ENCODE measurements at regions of chr17 and their contacts with region 1.

Region 1: DNA sequence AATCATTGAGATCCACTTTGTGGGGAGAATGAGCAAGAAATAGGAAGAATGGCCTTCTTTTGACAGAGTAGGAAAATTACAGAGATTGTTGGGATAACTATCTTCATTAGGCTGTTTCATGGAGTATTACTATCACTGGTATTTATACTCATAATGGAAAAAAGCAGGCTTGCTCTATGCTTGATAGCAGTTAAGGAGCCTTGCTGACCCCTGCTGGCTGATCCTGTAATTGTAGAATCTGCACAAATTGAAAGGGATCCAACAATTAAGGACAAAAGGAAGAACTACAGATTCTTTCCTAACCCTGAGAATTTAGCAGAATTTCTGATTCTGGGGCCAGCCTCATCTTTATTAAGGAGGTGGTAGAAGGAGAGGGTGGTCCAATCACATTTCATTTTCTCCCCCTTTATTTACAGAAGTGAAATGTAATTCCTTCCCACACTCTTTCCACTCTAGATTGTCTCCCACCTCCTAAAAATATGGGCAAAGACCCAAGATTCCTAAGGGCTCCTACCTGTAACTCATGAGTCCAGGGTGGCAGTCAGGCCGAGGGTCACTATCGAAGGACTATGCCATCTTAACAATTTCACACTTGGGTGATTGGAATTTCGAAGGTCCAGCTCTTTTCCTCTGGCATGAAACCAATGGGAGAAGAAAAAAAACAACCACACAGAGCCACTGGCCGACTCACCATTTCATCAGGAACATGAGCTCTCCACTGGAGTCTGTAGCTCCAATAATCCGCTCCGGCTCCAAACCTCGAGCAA is 26.3 kb downstream of the NFE2L1 start:
- DNase-seq: peak; percentile 82
- ATAC-seq: peak; percentile 71
- H3K4me3 Mint-ChIP-seq: no peak overlapping the region
- H3K27ac Mint-ChIP-seq: no peak overlapping the region
- H3K4me1 Mint-ChIP-seq: no peaks in the 10 kb centered on the region
- H3K27me3 Mint-ChIP-seq: no peaks in the 10 kb centered on the region

Region 2: GRCh38 chr17:47882247-47882646 is 192.3 kb before region 1 on chr17:
- CTCF ChIA-PET with region 1: no interaction called
- POLR2A ChIA-PET with region 1: no interaction called
- DNase-seq: no peak
- ATAC-seq: no peak
- H3K4me3 Mint-ChIP-seq: no peak overlapping the region
- H3K27ac Mint-ChIP-seq: no peak overlapping the region
- H3K4me1 Mint-ChIP-seq: peaks cover 19% of the 10 kb centered on the region
- H3K27me3 Mint-ChIP-seq: peaks cover 12% of the 10 kb centered on the region

Region 3: DNA sequence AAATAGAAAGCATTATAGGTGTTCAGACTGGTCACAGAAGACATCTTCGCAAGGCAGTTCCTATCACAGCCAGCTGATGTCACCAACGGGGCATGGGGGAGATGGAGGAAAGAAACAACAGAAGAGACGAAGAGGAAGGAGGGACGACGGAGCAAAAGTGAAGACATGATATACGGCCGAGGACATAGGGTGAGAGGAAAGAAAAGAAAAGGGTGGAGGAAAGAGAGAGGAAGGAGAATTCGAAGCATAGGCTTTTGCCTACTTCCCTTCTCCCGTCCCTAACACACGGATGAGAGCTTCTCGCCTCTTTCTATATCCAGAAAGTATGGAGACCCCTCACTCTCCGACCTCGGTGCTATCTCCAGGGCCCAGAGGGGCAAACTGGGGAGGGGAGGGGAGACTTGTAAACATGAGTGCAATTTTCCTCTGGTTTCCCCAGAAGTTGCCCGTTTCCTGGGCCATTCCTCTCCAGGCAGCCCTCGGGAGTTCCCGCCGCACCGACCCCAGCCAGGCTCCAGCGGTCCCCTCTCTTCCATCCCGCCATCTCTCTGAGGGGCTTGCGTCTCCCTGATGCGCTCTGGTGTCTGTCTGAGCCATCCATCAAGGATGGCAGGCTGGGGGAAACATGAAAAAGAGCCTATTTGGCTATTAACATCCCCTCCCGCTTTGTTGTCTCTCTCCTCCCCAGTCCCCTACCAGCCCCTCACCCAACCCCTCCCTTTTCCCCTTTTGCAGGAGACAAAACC is 62.9 kb before region 1 on chr17:
- CTCF ChIA-PET with region 1: interaction called, 11 read pairs
- POLR2A ChIA-PET with region 1: no interaction called
- DNase-seq: peak; percentile 74
- ATAC-seq: peak; percentile 77
- H3K4me3 Mint-ChIP-seq: peak overlapping the region; percentile 63
- H3K27ac Mint-ChIP-seq: no peak overlapping the region
- H3K4me1 Mint-ChIP-seq: peaks cover 22% of the 10 kb centered on the region
- H3K27me3 Mint-ChIP-seq: peaks cover 44% of the 10 kb centered on the region

Region 4: DNA sequence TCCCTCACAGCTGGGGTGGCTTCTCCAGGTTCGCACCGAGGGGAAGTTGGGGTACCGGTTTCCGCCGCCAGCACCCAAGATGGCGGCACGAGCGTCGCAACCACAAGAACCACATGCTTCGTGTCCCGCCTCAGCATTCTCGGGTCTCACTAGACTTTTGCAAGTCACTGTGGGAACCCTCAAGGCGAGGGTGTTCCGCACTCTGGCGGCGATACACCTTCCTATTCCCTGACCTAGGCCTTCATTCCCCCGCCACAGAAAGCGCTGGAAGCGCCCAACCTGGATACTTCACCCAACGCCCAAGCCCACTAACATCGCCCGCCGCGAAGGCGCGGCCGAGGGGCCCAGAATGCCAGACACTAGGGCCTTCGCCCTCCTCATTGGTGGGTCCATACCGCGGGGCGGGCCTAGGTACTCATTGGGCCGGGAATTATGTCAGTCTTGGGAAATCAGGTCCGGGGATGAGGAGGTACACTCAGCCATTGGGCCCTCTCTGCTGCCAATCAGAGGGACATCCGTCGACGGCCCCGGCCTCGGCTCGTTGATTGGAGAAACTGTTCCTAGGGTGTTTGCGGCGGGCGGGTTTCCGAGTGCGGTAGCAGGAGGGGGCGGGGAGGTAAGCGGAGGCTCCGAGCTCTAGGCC is 26.6 kb before region 1 on chr17 and contains the start of gene NFE2L1:
- CTCF ChIA-PET with region 1: interaction called, 44 read pairs
- POLR2A ChIA-PET with region 1: interaction called, 5 read pairs
- DNase-seq: peak; percentile 100
- ATAC-seq: peak; percentile 97
- H3K4me3 Mint-ChIP-seq: peak within 1 kb of the TSS; percentile 97
- H3K27ac Mint-ChIP-seq: peak within 1 kb of the TSS; percentile 95
- H3K4me1 Mint-ChIP-seq: peaks cover 56% of the 10 kb centered on the region
- H3K27me3 Mint-ChIP-seq: no peaks in the 10 kb centered on the region
- total RNA-seq, gene NFE2L1: 44.1 to 50.7 TPM

Region 5: DNA sequence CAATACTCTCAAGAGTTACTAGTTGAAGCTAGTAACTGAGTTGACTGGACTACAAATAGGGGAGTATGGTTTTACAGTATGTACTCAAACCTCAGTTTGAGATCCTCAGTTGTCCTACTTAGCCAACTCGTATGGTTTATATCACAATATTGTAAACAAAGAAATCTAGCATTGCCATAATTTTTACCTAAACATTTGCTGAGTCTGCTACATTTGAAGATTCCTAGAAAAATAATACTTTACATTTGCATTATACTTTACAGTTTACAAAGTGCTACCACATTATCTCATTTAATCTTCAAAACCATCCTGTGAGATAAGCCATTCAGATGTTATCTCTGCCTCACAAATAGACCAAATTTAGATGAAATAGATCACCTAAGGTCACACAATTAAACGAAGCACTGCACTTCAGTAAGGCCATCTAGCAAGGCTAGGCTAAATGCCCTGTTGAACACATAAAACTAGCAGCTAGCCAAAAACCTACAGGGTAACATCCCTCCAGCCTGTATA is 10.5 kb after region 1 on chr17:
- CTCF ChIA-PET with region 1: interaction called, 33 read pairs
- POLR2A ChIA-PET with region 1: no interaction called
- DNase-seq: no peak
- ATAC-seq: no peak
- H3K4me3 Mint-ChIP-seq: no peak overlapping the region
- H3K27ac Mint-ChIP-seq: no peak overlapping the region
- H3K4me1 Mint-ChIP-seq: peaks cover 7% of the 10 kb centered on the region
- H3K27me3 Mint-ChIP-seq: no peaks in the 10 kb centered on the region

Region 6: DNA sequence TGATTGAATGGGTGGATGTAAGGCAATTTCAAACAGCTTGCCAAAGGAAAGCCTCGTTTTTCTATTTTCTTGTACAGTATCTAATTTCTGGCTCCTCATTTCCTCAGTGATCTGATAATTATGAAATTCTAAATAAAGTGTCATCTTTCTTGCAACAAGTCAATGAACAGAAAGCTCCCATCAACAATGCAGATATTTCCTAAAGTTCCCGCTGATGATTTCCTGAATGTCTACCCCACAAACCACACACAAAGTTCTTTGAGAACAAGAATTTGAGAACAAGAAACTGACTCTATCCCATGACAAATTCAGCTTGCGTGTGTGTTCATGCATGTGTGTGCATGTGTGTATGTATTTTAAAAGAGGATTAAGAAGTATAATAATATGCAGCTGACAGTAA is 320.3 kb after region 1 on chr17:
- CTCF ChIA-PET with region 1: no interaction called
- POLR2A ChIA-PET with region 1: no interaction called
- DNase-seq: no peak
- ATAC-seq: no peak
- H3K4me3 Mint-ChIP-seq: no peak overlapping the region
- H3K27ac Mint-ChIP-seq: no peak overlapping the region
- H3K4me1 Mint-ChIP-seq: peaks cover 27% of the 10 kb centered on the region
- H3K27me3 Mint-ChIP-seq: no peaks in the 10 kb centered on the region

Region 7: DNA sequence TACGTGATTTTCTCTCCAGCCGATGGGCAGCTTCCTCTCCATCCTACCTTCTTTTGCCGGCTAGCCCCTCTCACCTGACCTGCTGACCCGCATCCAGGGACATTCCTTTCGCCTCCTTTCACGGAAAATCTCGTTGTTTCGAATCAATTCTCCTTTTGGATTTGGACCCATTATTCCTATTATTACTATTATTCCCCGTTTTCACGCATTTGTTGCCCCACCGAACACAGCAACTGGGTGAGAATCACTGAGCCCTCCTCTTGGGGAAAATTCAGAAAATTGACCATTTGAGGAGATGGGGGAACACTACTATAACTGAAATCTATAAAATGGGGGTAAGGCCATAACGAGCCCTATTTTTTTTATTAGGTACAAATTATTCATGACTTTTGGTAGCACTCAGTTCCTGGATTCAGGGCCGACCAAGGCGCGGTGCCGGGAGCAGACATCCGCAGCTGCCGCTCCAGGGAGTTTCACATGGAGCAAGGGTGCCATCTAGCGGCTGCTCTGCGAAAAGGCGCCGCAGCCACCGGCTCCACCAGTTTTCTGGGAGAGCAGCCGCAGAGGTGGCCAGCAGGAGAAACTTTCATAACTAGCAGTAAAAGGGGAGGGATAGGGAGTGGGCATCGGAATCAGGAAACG is 543.9 kb after region 1 on chr17:
- CTCF ChIA-PET with region 1: interaction called, 13 read pairs
- POLR2A ChIA-PET with region 1: no interaction called
- DNase-seq: peak; percentile 86
- ATAC-seq: peak; percentile 69
- H3K4me3 Mint-ChIP-seq: peak overlapping the region; percentile 27
- H3K27ac Mint-ChIP-seq: no peak overlapping the region
- H3K4me1 Mint-ChIP-seq: peaks cover 39% of the 10 kb centered on the region
- H3K27me3 Mint-ChIP-seq: peaks cover 87% of the 10 kb centered on the region